Heart right ventricle (tissue), 16 donors: ENCODE measurements at regions of chr20 and their contacts with region 1.

Region 1: DNA sequence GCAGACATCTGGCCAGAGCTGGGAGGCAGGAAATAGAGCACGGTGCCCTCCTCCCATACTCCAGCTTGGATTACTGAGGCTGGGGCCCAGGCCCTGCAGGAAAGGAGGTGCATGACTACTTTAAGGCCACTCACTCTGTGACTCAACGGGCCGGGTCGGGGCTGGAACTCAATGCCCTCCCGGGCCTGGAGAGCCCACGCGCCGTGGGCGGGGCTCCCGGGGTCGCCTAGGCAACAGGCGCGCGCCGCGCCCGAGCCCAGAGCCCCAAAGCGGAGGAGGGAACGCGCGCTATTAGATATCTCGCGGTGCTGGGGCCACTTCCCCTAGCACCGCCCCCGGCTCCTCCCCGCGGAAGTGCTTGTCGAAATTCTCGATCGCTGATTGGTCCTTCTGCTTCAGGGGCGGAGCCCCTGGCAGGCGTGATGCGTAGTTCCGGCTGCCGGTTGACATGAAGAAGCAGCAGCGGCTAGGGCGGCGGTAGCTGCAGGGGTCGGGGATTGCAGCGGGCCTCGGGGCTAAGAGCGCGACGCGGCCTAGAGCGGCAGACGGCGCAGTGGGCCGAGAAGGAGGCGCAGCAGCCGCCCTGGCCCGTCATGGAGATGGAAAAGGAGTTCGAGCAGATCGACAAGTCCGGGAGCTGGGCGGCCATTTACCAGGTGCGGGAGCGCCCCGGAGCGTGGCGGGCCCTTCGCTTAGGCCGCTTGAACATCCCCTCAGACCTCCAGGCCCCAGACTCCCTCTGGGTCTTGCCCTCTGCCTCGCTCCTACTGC is at the start of gene PTPN1:
- DNase-seq: peak; percentile 98 to 99
- ATAC-seq: peak; percentile 98 to 99 (median 98)
- H3K4me3 ChIP-seq: peak within 1 kb of the TSS; percentile 82 to 99 (median 97)
- H3K27ac ChIP-seq: peak within 1 kb of the TSS; percentile 70 to 98 (median 92)
- H3K4me1 ChIP-seq: peaks cover 0 to 61% (median 46%) of the 10 kb centered on the region in 9 donors
- H3K27me3 ChIP-seq: no peaks in the 10 kb centered on the region
- CTCF ChIP-seq: peak in 2 of 9 donors; percentile 12 to 16
- total RNA-seq, gene PTPN1: 25.2 to 40.1 (median 29.4) TPM

Region 2: GRCh38 chr20:50395258-50395729 is 114.8 kb before region 1 on chr20:
- intact Hi-C with region 1: no loop called
- DNase-seq: peak; percentile 44 to 79
- ATAC-seq: peak in 7 of 8 donors; percentile 33 to 86 (median 78)
- H3K4me3 ChIP-seq: no peak overlapping the region
- H3K27ac ChIP-seq: peak overlapping the region; percentile 77 to 91 (median 82)
- H3K4me1 ChIP-seq: peaks cover 0 to 60% (median 37%) of the 10 kb centered on the region in 9 donors
- H3K27me3 ChIP-seq: no peaks in the 10 kb centered on the region
- CTCF ChIP-seq: no peak

Region 3: GRCh38 chr20:50561379-50562078 is 51.4 kb after region 1 on chr20:
- intact Hi-C with region 1: loop called in 2 of 10 experiments (anchors 5 kb)
- DNase-seq: no peak
- ATAC-seq: no peak
- H3K4me3 ChIP-seq: no peak overlapping the region
- H3K27ac ChIP-seq: peak overlapping the region in 4 of 10 donors; percentile 21 to 62 (median 34)
- H3K4me1 ChIP-seq: peaks cover 0 to 68% (median 38%) of the 10 kb centered on the region in 9 donors
- H3K27me3 ChIP-seq: no peaks in the 10 kb centered on the region
- CTCF ChIP-seq: no peak

Region 4: DNA sequence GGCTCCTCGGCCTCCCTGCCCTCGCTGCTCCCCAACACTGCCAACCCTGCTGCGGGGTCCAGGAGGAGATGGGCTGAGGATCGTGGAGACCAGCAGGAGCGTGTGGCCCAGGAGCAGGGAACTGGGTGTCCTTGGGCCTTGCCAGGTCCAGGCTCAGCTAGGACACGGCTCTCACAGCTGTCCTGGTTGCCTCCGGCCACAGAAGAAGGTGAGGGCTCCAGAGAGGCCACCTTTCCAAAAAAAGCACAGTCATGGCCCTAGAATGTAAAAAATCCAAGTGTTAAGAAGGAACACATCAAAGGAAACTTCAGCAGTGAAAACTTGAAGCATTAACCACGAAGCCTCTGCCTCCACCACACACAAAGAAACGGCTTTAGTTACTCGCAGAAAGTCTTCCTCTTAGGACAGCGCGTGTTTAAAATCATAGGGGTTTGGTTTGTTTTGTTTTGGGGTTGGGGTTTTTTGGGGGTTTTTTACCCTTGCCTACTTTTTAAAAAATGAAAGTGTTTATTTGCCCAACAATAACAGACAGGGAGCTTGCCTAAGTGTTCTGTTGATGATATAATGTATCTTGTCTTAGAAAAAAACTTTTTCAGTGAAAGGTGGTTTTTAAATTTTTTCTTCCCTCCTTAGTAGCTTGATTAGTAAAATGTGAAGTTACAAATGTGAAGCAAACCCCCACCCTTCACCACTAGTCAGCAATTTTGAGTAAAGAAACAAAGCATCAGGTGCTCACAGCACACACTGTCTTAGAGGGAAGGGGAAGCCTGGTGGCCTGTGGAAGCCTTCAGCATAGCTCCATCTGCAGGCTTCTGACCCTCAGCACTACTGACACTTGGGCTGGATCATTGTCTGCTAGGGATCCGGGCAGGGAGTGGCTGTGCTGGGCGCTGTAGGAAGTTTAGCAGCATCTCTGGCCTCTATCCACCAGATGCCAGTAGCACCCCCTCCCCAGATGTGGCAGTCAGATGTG is 60.0 kb after region 1 on chr20:
- intact Hi-C with region 1: loop called in 7 of 10 experiments (anchors 2 to 10 kb)
- DNase-seq: no peak
- ATAC-seq: peak in 4 of 8 donors; percentile 7 to 55 (median 40)
- H3K4me3 ChIP-seq: no peak overlapping the region
- H3K27ac ChIP-seq: peak overlapping the region in 4 of 10 donors; percentile 19 to 69 (median 37)
- H3K4me1 ChIP-seq: peaks cover 10 to 66% (median 52%) of the 10 kb centered on the region in 9 donors
- H3K27me3 ChIP-seq: no peaks in the 10 kb centered on the region
- CTCF ChIP-seq: peak in 7 of 9 donors; percentile 10 to 51 (median 26)